ENCODE measurements at regions of chr10 and their contacts with region 1.

Region 1: GRCh38 chr10:23158370-23158769 is 33.7 kb upstream of the PTF1A start:
- DNase-seq: peak; percentile 59
- ATAC-seq: peak; percentile 61
- H3K4me3 ChIP-seq: no peak overlapping the region
- H3K4me3 Mint-ChIP-seq: no peak overlapping the region
- H3K27ac ChIP-seq: no peak overlapping the region
- H3K27ac Mint-ChIP-seq: no peak overlapping the region
- H3K4me1 ChIP-seq: no peaks in the 10 kb centered on the region
- H3K4me1 Mint-ChIP-seq: peaks cover 8% of the 10 kb centered on the region
- H3K27me3 ChIP-seq: peaks cover 0 to 9% (median 0%) of the 10 kb centered on the region in 4 experiments
- H3K27me3 Mint-ChIP-seq: peaks cover 42% of the 10 kb centered on the region
- CTCF ChIP-seq: peak; percentile 86

Region 2: GRCh38 chr10:23110722-23111516 is 47.5 kb before region 1 on chr10:
- CTCF ChIA-PET with region 1: no interaction called
- POLR2A ChIA-PET with region 1: no interaction called
- intact Hi-C with region 1: no loop called
- DNase-seq: no peak
- ATAC-seq: no peak
- H3K4me3 ChIP-seq: no peak overlapping the region
- H3K4me3 Mint-ChIP-seq: no peak overlapping the region
- H3K27ac ChIP-seq: no peak overlapping the region
- H3K27ac Mint-ChIP-seq: no peak overlapping the region
- H3K4me1 ChIP-seq: no peaks in the 10 kb centered on the region
- H3K4me1 Mint-ChIP-seq: no peaks in the 10 kb centered on the region
- H3K27me3 ChIP-seq: no peaks in the 10 kb centered on the region
- H3K27me3 Mint-ChIP-seq: no peaks in the 10 kb centered on the region
- CTCF ChIP-seq: no peak

Region 3: GRCh38 chr10:23171223-23171876 is 13.0 kb after region 1 on chr10:
- CTCF ChIA-PET with region 1: interaction called, 23 read pairs
- POLR2A ChIA-PET with region 1: no interaction called
- intact Hi-C with region 1: no loop called
- DNase-seq: no peak
- ATAC-seq: no peak
- H3K4me3 ChIP-seq: no peak overlapping the region
- H3K4me3 Mint-ChIP-seq: no peak overlapping the region
- H3K27ac ChIP-seq: no peak overlapping the region
- H3K27ac Mint-ChIP-seq: no peak overlapping the region
- H3K4me1 ChIP-seq: peaks cover 0 to 5% of the 10 kb centered on the region in 2 donors
- H3K4me1 Mint-ChIP-seq: peaks cover 3% of the 10 kb centered on the region
- H3K27me3 ChIP-seq: peaks cover 0 to 31% (median 14%) of the 10 kb centered on the region in 4 experiments
- H3K27me3 Mint-ChIP-seq: peaks cover 50% of the 10 kb centered on the region
- CTCF ChIP-seq: no peak

Region 4: GRCh38 chr10:23525406-23525805 is 367.0 kb after region 1 on chr10:
- CTCF ChIA-PET with region 1: interaction called, 19 read pairs
- POLR2A ChIA-PET with region 1: no interaction called
- intact Hi-C with region 1: loop called (anchors 1 kb)
- DNase-seq: peak; percentile 65
- ATAC-seq: peak; percentile 68
- H3K4me3 ChIP-seq: no peak overlapping the region
- H3K4me3 Mint-ChIP-seq: no peak overlapping the region
- H3K27ac ChIP-seq: no peak overlapping the region
- H3K27ac Mint-ChIP-seq: no peak overlapping the region
- H3K4me1 ChIP-seq: peaks cover 17 to 19% of the 10 kb centered on the region in 2 donors
- H3K4me1 Mint-ChIP-seq: peaks cover 33% of the 10 kb centered on the region
- H3K27me3 ChIP-seq: no peaks in the 10 kb centered on the region
- H3K27me3 Mint-ChIP-seq: peaks cover 6% of the 10 kb centered on the region
- CTCF ChIP-seq: peak; percentile 72

Region 5: DNA sequence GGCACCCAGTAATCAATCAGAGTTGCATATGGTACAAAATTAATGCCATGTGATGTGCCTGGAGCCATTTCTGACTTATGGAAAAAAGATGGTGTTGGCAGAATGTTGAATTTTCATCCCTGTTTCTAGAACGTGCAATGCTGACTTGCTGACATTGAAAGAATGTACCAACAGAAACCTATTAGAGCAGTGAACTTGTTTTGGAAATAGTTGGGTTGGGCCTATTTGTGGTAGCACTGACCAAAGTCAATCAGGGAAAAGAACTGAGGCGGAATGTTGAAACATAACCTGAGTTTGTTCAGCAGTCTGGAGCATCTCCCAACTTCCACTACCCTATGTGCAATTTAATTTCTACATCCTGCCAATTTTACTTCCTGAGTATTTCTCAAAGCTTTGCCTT is 1038.9 kb after region 1 on chr10:
- CTCF ChIA-PET with region 1: interaction called, 18 read pairs
- POLR2A ChIA-PET with region 1: no interaction called
- intact Hi-C with region 1: no loop called
- DNase-seq: no peak
- ATAC-seq: no peak
- H3K4me3 ChIP-seq: no peak overlapping the region
- H3K4me3 Mint-ChIP-seq: no peak overlapping the region
- H3K27ac ChIP-seq: no peak overlapping the region
- H3K27ac Mint-ChIP-seq: no peak overlapping the region
- H3K4me1 ChIP-seq: no peaks in the 10 kb centered on the region
- H3K4me1 Mint-ChIP-seq: no peaks in the 10 kb centered on the region
- H3K27me3 ChIP-seq: peaks cover 0 to 6% (median 2%) of the 10 kb centered on the region in 4 experiments
- H3K27me3 Mint-ChIP-seq: peaks cover 3% of the 10 kb centered on the region
- CTCF ChIP-seq: no peak

Region 6: DNA sequence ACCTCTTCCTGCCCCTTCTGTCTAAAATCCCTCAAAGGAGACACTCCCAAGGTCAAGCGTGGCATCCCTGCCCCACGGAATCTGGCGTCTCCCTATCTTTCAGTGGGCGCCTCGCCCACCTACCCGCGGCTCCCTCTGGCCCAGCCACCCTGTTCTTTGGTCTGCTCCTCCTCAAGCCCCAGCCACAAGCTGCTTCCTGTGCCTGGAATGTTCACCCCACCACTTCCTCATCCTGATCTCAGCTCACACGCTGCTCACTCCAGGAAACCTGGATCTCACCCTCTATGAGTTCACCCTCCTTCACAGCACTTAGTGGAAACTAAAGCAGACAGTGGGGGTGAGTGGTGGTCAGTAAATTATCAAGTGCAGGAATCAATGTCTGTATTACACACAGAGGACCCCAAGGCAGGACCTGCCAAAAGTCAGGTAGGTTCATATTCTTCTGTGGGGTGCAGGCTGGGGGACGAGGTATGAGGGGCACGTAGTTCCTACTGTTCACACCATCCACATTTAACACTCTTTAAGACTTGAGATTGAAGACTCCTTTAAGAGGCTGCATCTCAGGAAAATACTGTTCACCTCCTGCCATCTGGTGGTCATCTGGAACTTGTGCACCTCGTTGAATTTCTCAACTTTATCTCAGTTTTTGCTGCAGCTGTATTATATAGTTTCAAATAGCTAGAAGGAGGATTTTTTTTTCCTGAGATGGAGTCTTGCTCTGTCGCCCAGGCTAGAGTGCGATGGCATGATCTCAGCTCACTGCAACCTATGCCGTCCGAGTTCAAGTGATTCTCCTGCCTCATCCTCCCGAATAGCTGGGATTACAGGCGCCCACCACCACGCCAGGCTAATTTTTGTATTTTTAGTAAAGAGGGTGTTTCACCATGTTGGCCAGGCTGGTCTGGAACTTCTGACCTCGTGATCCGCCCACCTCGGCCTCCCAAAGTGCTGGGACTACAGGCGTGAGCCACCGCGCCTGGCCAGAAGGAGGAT is 1398.7 kb after region 1 on chr10:
- CTCF ChIA-PET with region 1: interaction called, 10 read pairs
- POLR2A ChIA-PET with region 1: no interaction called
- intact Hi-C with region 1: no loop called
- DNase-seq: peak; percentile 4
- ATAC-seq: no peak
- H3K4me3 ChIP-seq: no peak overlapping the region
- H3K4me3 Mint-ChIP-seq: no peak overlapping the region
- H3K27ac ChIP-seq: no peak overlapping the region
- H3K27ac Mint-ChIP-seq: no peak overlapping the region
- H3K4me1 ChIP-seq: no peaks in the 10 kb centered on the region
- H3K4me1 Mint-ChIP-seq: no peaks in the 10 kb centered on the region
- H3K27me3 ChIP-seq: no peaks in the 10 kb centered on the region
- H3K27me3 Mint-ChIP-seq: peaks cover 9% of the 10 kb centered on the region
- CTCF ChIP-seq: peak; percentile 72